CD4-positive, alpha-beta memory T cell (primary cell): ENCODE measurements at regions of chr13 and their contacts with region 1.

Region 1: GRCh38 chr13:81017513-81018152 is 676.7 kb upstream of the SPRY2 start:
- DNase-seq: no peak
- H3K4me3 ChIP-seq: no peak overlapping the region
- H3K4me3 Mint-ChIP-seq: no peak overlapping the region
- H3K27ac ChIP-seq: no peak overlapping the region
- H3K27ac Mint-ChIP-seq: no peak overlapping the region
- H3K4me1 ChIP-seq: no peaks in the 10 kb centered on the region
- H3K4me1 Mint-ChIP-seq: no peaks in the 10 kb centered on the region
- H3K27me3 ChIP-seq: no peaks in the 10 kb centered on the region
- H3K27me3 Mint-ChIP-seq: no peaks in the 10 kb centered on the region

Region 2: GRCh38 chr13:79679334-79679733 is 1338.3 kb before region 1 on chr13:
- CTCF ChIA-PET with region 1: no interaction called
- POLR2A ChIA-PET with region 1: no interaction called
- intact Hi-C with region 1: loop called (anchors 10 kb)
- DNase-seq: no peak
- H3K4me3 ChIP-seq: no peak overlapping the region
- H3K4me3 Mint-ChIP-seq: no peak overlapping the region
- H3K27ac ChIP-seq: no peak overlapping the region
- H3K27ac Mint-ChIP-seq: no peak overlapping the region
- H3K4me1 ChIP-seq: no peaks in the 10 kb centered on the region
- H3K4me1 Mint-ChIP-seq: no peaks in the 10 kb centered on the region
- H3K27me3 ChIP-seq: no peaks in the 10 kb centered on the region
- H3K27me3 Mint-ChIP-seq: peaks cover 0 to 8% of the 10 kb centered on the region in 2 donors